ENCODE measurements at regions of chr11 and their contacts with region 1.

Region 1: GRCh38 chr11:8911029-8911826 is at the start of gene AKIP1:
- DNase-seq: peak; percentile 95
- ATAC-seq: peak; percentile 98
- total RNA-seq, gene AKIP1: 12.9 to 15.6 TPM

Region 2: GRCh38 chr11:8610532-8611116 is 300.6 kb before region 1 on chr11:
- intact Hi-C with region 1: no loop called
- DNase-seq: no peak
- ATAC-seq: no peak

Region 3: GRCh38 chr11:8688414-8689362 is 222.5 kb before region 1 on chr11:
- intact Hi-C with region 1: loop called in 1 of 2 experiments (anchors 10 kb)
- DNase-seq: peak; percentile 94 to 97
- ATAC-seq: peak; percentile 93

Region 4: DNA sequence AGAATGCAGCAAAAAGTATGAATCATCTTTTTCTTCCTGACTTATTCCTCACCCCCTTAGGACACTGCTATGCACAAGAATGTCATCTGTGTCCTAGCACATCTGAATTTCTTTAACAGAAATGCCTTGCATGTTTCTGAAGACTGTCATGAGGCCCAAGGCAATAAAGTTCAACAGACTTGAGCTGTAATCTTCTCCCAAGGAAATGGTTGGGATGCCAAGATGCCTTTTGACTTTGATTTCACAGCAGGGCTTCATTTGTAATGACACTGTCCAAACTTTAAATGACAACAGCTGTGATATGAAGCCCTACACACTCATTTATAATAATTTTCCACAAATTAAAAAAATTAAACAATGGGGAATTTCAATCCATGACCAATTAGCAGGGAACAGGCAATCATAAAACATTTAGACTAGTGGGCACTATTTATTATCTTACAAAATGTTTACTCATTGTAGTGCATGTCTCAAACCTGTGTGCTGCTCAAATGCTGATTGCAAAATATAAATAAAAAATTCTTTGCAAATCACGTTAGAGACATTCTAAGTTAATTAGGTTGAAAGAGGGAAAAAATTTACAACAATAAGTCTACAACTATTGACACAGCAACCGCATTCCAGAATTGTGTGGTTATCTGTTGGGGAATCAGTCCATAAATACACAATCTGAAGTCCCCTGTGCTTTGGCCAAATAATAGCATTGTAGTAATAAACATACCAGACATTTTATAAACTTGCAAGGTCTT is 995.0 kb after region 1 on chr11:
- intact Hi-C with region 1: no loop called
- DNase-seq: no peak
- ATAC-seq: no peak